ENCODE measurements at regions of chr1 and their contacts with region 1.

Region 1: GRCh38 chr1:181062836-181063428 is 25.6 kb upstream of the IER5 start:
- DNase-seq: peak in 3 of 9 donors; percentile 19 to 42 (median 30)
- ATAC-seq: peak; percentile 81
- H3K4me3 ChIP-seq: peak overlapping the region; percentile 33
- H3K4me3 Mint-ChIP-seq: peak overlapping the region; percentile 59 to 81 (median 74)
- H3K27ac ChIP-seq: no peak overlapping the region
- H3K27ac Mint-ChIP-seq: peak overlapping the region; percentile 43 to 95 (median 85)
- H3K4me1 ChIP-seq: peaks cover 6 to 8% of the 10 kb centered on the region in 2 donors
- H3K4me1 Mint-ChIP-seq: peaks cover 14 to 26% (median 22%) of the 10 kb centered on the region in 7 donors
- H3K27me3 ChIP-seq: no peaks in the 10 kb centered on the region
- H3K27me3 Mint-ChIP-seq: no peaks in the 10 kb centered on the region

Region 2: DNA sequence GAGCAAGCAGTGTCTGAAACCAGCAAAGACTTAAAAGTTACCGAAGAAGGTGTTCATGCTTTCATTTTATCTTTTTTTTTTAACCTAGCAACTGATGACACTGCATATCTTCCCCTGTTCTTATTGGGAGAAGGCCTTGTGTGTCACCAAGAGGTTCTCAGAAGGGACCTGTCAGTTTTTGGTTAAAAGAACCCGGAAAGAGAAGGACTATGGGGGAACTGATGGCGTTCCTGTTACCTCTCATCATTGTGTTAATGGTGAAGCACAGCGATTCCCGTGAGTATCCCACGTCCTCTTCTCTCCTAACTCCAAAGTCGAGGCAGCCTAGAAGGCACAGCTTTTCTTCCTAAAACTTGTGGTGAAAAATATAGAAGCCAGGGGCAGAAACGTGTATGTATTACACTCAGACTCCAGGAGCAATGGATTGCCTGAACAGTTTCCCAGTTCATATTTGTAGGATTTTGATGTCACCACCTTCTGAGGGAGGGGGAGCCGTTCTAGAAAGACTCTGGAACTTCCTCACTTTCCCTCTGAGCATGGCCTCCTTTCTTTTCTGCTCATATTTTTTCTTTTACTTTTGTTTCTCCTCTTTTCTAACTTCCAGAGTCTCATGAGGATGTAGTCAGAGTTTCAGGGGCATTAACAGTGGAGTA is 29.0 kb before region 1 on chr1 and contains the start of gene MR1:
- CTCF ChIA-PET with region 1: no interaction called
- POLR2A ChIA-PET with region 1: interaction called, 11 read pairs
- intact Hi-C with region 1: loop called in 1 of 2 experiments (anchors 2 kb)
- DNase-seq: peak in 8 of 9 donors; percentile 32 to 92 (median 88)
- ATAC-seq: peak; percentile 97
- H3K4me3 ChIP-seq: peak within 1 kb of the TSS; percentile 77
- H3K4me3 Mint-ChIP-seq: peak within 1 kb of the TSS; percentile 84 to 99 (median 97)
- H3K27ac ChIP-seq: peak within 1 kb of the TSS; percentile 95
- H3K27ac Mint-ChIP-seq: peak within 1 kb of the TSS; percentile 95 to 100 (median 98)
- H3K4me1 ChIP-seq: peaks cover 32 to 42% of the 10 kb centered on the region in 2 donors
- H3K4me1 Mint-ChIP-seq: peaks cover 39 to 69% (median 61%) of the 10 kb centered on the region in 7 donors
- H3K27me3 ChIP-seq: no peaks in the 10 kb centered on the region
- H3K27me3 Mint-ChIP-seq: peaks cover 0 to 6% (median 0%) of the 10 kb centered on the region in 5 donors
- total RNA-seq, gene MR1: 19.8 to 35.8 (median 29.7) TPM

Region 3: DNA sequence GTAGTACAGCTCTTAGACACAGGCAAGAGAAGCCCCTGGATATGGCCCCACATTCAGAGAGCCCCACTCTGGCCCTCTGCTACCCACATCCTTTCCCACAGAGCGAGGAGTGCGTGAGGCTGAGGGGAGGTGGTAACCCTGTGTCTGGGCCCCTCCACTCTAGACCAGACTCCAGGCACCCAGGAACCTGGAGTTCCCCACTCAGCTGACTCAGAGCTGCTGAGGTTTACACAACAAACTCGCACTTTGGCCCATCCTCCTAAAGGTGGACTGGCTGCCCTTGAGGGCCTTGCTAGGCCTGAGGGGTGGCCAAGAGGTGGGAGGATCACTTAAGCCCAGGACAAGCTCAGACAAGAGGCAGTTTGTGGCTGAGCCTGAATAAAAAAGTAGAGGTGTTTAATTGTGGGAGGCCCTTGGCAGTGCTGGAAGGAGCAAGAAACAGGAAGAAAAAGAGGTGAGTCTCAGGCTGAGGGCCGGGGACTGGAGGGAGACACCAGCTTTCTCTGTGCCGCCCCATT is 18.4 kb before region 1 on chr1:
- CTCF ChIA-PET with region 1: interaction called, 3 read pairs
- POLR2A ChIA-PET with region 1: no interaction called
- intact Hi-C with region 1: loop called in 1 of 2 experiments (anchors 2 kb)
- DNase-seq: peak in 3 of 9 donors; percentile 13 to 64 (median 22)
- ATAC-seq: peak; percentile 88
- H3K4me3 ChIP-seq: no peak overlapping the region
- H3K4me3 Mint-ChIP-seq: peak overlapping the region in 3 of 10 donors; percentile 12 to 86 (median 22)
- H3K27ac ChIP-seq: no peak overlapping the region
- H3K27ac Mint-ChIP-seq: peak overlapping the region; percentile 54 to 98 (median 80)
- H3K4me1 ChIP-seq: peaks cover 6 to 9% of the 10 kb centered on the region in 2 donors
- H3K4me1 Mint-ChIP-seq: peaks cover 28 to 56% (median 47%) of the 10 kb centered on the region in 7 donors
- H3K27me3 ChIP-seq: no peaks in the 10 kb centered on the region
- H3K27me3 Mint-ChIP-seq: no peaks in the 10 kb centered on the region

Measured in naive thymus-derived CD4-positive, alpha-beta T cell (primary cell).